Ovary (tissue), 10 donors: ENCODE measurements at regions of chr5 and their contacts with region 1.

Region 1: GRCh38 chr5:151126199-151126645 is 31.4 kb downstream of the ANXA6 start:
- DNase-seq: peak; percentile 61 to 80 (median 75)
- H3K4me3 ChIP-seq: no peak overlapping the region
- H3K27ac ChIP-seq: no peak overlapping the region
- H3K4me1 ChIP-seq: no peaks in the 10 kb centered on the region
- H3K27me3 ChIP-seq: no peaks in the 10 kb centered on the region
- CTCF ChIP-seq: peak; percentile 60 to 87 (median 80)
- EP300 ChIP-seq: no peak
- POLR2A ChIP-seq: no peak

Region 2: DNA sequence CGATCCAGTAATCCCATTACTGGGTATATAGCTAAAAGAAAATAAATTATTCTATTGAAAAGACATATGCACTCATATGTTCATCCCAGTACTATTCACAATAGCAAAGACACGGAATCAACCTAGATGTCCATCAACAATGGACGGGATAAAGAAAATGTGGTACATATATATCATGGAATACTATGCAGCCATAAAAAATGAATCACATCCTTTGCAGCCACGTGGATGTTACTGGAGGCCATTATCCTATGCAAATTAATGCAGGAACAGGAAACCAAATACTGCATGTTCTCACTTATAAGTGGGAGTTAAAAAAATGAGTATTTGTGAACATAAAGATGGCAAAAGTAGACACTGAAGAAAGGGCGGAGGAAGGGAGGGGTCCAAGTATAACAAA is 296.5 kb before region 1 on chr5:
- intact Hi-C with region 1: no loop called
- DNase-seq: no peak
- H3K4me3 ChIP-seq: no peak overlapping the region
- H3K27ac ChIP-seq: no peak overlapping the region
- H3K4me1 ChIP-seq: no peaks in the 10 kb centered on the region
- H3K27me3 ChIP-seq: no peaks in the 10 kb centered on the region
- CTCF ChIP-seq: no peak
- EP300 ChIP-seq: no peak
- POLR2A ChIP-seq: no peak

Region 3: DNA sequence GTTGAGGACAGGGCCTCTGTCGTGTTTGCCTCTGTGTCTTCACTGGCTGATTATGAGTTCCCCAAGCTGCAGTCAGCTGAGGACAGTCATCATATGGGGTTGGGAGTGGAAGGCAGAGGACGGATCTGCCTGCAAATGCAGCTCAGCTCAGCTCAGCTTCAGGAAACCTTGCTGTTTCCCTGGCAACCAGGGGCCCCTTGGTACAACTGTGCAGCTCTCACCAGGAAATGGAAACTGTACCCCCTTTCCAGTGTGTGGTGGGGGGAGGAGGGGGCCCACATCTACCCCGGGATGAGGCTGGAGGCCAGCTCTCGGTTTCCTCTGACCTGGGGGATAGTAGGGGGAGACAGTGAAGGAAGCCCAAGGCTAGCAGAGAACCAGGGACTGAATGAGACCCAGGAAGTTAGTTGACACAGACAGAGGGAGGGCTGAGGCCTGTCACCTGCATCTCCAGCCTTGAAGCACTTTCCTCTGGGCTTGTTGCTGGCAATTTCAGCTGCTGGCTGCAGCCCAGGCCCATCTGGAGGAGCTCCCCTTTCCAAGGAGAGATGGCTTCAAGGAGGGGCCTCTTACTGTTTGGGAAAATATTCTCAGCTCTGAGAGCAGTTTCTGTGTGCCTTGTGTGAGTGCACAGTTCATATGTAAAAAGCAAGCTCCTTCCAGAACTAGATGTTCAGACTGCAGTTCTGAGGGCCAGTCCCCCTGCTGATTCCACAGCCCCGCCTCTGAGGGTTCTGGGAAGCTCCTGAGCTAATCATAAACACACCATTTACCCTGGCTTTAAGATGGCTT is 24.4 kb after region 1 on chr5:
- intact Hi-C with region 1: no loop called
- DNase-seq: peak; percentile 73 to 91 (median 79)
- H3K4me3 ChIP-seq: no peak overlapping the region
- H3K27ac ChIP-seq: peak overlapping the region; percentile 18 to 82
- H3K4me1 ChIP-seq: peaks cover 32% of the 10 kb centered on the region
- H3K27me3 ChIP-seq: no peaks in the 10 kb centered on the region
- CTCF ChIP-seq: no peak
- EP300 ChIP-seq: no peak
- POLR2A ChIP-seq: peak; percentile 13

Region 4: GRCh38 chr5:151164686-151165392 is 38.6 kb after region 1 on chr5:
- intact Hi-C with region 1: loop called (anchors 2 to 5 kb)
- DNase-seq: peak; percentile 69 to 85 (median 82)
- H3K4me3 ChIP-seq: no peak overlapping the region
- H3K27ac ChIP-seq: no peak overlapping the region
- H3K4me1 ChIP-seq: peaks cover 8% of the 10 kb centered on the region
- H3K27me3 ChIP-seq: no peaks in the 10 kb centered on the region
- CTCF ChIP-seq: peak; percentile 56 to 93 (median 85)
- EP300 ChIP-seq: no peak
- POLR2A ChIP-seq: no peak

Region 5: GRCh38 chr5:151223469-151224264 is 97.4 kb after region 1 on chr5 and contains the start of gene CCDC69:
- intact Hi-C with region 1: loop called in 1 of 4 experiments (anchors 10 kb)
- DNase-seq: peak; percentile 76 to 85 (median 79)
- H3K4me3 ChIP-seq: peak within 1 kb of the TSS; percentile 73
- H3K27ac ChIP-seq: peak within 1 kb of the TSS; percentile 6 to 64
- H3K4me1 ChIP-seq: peaks cover 14% of the 10 kb centered on the region
- H3K27me3 ChIP-seq: no peaks in the 10 kb centered on the region
- CTCF ChIP-seq: no peak
- EP300 ChIP-seq: no peak
- POLR2A ChIP-seq: peak; percentile 89
- total RNA-seq, gene CCDC69: 22.6 to 60.1 (median 37.3) TPM

Region 6: DNA sequence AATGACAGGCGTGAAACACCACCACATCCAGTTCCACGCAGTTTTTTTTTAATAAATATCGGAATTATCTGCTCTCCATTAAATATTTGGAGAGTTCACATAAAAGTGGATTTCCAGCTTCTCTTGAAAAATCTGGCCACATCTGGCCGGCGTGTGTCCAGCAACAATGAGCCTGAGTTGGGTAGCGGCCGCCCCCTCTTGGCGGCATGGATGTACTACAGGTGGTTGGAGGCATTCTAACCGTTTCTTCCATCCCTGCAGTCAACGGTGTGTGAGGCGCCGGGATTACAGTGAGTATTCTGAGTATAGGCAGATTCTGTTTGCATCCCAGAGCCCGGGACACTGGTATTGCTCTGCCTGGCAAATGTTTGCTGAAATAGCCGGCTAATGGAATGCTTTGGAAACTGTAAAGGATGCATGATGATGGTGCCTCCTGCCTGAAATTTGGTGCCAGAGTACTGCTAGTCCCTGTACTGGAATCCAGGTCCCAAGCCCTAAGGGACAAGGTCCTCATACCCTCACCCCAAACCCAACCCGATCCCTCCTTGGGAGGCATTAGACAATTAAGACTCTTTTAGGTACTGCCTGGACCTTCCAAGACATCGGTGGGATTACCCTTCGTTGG is 113.1 kb after region 1 on chr5:
- intact Hi-C with region 1: loop called in 2 of 4 experiments (anchors 5 to 10 kb)
- DNase-seq: peak; percentile 81 to 91 (median 89)
- H3K4me3 ChIP-seq: peak overlapping the region; percentile 27
- H3K27ac ChIP-seq: peak overlapping the region in 1 of 2 donors; percentile 52
- H3K4me1 ChIP-seq: peaks cover 7% of the 10 kb centered on the region
- H3K27me3 ChIP-seq: no peaks in the 10 kb centered on the region
- CTCF ChIP-seq: peak; percentile 61 to 85 (median 78)
- EP300 ChIP-seq: no peak
- POLR2A ChIP-seq: no peak